ENCODE measurements at regions of chr16 and their contacts with region 1.

Region 1: DNA sequence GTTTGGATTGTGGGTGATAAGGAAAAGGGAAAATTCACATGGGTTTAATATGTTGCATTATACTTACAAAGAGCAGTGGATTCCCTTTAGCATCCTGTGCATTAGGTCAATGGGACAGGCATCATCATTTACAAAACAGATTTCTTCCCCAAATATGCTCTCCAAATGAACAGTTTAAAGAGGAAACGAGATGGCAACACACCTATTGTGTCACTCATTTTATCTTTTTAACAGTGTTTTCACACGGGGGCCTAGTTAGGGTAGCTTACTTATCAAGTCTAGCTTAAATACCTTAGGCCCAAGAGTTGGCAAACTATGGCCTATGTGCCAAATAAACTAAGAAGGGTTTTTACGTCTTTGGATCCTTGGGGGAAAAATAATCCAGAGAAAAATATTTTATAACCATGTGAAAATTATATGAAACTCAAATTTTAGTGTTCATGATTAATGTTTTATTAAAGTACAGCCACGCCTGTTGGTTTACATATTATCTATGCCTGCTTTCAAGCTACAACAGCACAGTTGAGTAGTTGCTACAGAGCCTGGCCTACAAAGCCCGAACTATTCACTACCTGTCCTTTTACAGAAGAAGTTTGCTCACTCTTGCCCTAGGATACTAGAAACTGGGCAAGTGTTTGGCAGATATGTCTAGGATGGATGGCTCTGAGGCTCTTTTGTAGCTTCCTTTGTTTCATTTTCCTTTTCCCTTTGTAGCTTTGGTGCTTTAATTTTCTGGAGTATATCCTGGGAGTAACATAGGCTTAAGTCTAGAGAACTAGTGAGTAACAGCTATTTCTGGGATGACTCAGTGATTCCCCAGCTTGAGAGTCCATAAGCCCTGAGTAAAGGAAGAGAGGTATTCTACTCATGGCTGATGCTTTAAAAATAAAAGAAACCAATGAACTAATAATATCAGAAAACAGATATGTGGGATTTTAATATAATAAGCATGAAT is 12.4 kb downstream of the NUP93 start:
- DNase-seq: peak; percentile 72
- H3K4me3 Mint-ChIP-seq: peak overlapping the region; percentile 50
- H3K27ac Mint-ChIP-seq: peak overlapping the region; percentile 79
- H3K4me1 Mint-ChIP-seq: peaks cover 12% of the 10 kb centered on the region
- H3K27me3 Mint-ChIP-seq: no peaks in the 10 kb centered on the region
- CTCF ChIP-seq: no peak

Region 2: DNA sequence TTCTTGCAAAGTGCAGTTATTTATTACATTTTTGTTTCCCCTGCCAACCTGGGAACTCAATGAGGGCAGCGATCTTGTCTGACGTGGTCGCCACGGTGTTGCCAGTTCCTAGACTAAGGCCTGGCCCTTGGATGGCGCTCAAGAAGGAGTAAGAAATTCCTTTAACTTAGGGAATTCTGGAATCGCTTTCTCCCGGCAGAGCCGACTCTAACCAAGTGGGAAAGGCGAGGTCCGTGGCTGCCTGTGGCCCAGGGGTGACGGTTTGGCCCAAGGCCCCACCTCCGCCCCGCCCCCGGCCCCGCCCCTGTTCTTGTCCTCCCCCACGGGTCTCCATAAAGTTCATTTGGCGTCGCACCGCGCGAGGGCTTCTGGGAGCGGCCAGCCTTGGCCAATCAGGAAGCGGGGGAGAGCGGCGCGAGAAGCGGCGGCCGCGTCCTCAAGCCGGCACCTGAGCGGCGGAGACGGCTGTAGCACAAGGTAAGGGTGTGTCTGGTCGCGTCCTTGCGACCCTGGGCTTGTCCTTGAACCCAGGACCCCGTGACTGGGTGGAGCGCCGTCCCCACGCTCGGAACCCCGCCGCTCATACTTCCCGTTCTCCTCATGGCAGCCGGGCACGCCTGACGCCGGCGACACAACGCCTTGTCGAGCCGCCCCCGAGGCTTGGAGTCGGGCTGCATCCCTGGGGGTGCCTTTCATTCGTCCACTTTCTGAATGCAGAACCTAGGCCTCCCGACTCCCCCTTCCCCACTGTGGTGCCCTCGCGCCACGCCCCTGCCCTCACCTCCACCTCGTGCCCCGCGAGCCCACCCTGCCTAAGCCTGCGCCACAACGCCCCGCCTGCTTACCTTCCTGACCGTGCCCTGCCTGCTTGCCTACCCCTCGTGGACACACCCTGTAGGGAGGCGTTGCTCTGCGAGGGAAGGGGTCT is 12.3 kb before region 1 on chr16 and contains the start of gene NUP93:
- CTCF ChIA-PET with region 1: no interaction called
- POLR2A ChIA-PET with region 1: interaction called, 18 read pairs
- intact Hi-C with region 1: no loop called
- DNase-seq: peak; percentile 96
- H3K4me3 Mint-ChIP-seq: no peak within 1 kb of the TSS
- H3K27ac Mint-ChIP-seq: peak within 1 kb of the TSS; percentile 92
- H3K4me1 Mint-ChIP-seq: peaks cover 17% of the 10 kb centered on the region
- H3K27me3 Mint-ChIP-seq: no peaks in the 10 kb centered on the region
- CTCF ChIP-seq: no peak
- total RNA-seq, gene NUP93: 53.9 and 60.2 TPM in 2 replicates

Region 3: GRCh38 chr16:56860226-56861020 is 118.1 kb after region 1 on chr16:
- CTCF ChIA-PET with region 1: no interaction called
- POLR2A ChIA-PET with region 1: no interaction called
- intact Hi-C with region 1: no loop called
- DNase-seq: no peak
- H3K4me3 Mint-ChIP-seq: no peak overlapping the region
- H3K27ac Mint-ChIP-seq: peak overlapping the region; percentile 91
- H3K4me1 Mint-ChIP-seq: peaks cover 6% of the 10 kb centered on the region
- H3K27me3 Mint-ChIP-seq: no peaks in the 10 kb centered on the region
- CTCF ChIP-seq: no peak

Region 4: GRCh38 chr16:57115514-57116182 is 373.3 kb after region 1 on chr16:
- CTCF ChIA-PET with region 1: no interaction called
- POLR2A ChIA-PET with region 1: no interaction called
- intact Hi-C with region 1: no loop called
- DNase-seq: no peak
- H3K4me3 Mint-ChIP-seq: no peak overlapping the region
- H3K27ac Mint-ChIP-seq: no peak overlapping the region
- H3K4me1 Mint-ChIP-seq: peaks cover 11% of the 10 kb centered on the region
- H3K27me3 Mint-ChIP-seq: no peaks in the 10 kb centered on the region
- CTCF ChIP-seq: no peak